ENCODE measurements at regions of chr9 and their contacts with region 1.

Region 1: GRCh38 chr9:5886114-5886939 is 4.4 kb upstream of the MLANA start:
- DNase-seq: peak; percentile 74
- ATAC-seq: peak; percentile 80
- H3K4me3 ChIP-seq: no peak overlapping the region
- H3K4me3 Mint-ChIP-seq: no peak overlapping the region
- H3K27ac ChIP-seq: no peak overlapping the region
- H3K27ac Mint-ChIP-seq: no peak overlapping the region
- H3K4me1 ChIP-seq: no peaks in the 10 kb centered on the region
- H3K4me1 Mint-ChIP-seq: no peaks in the 10 kb centered on the region
- H3K27me3 ChIP-seq: no peaks in the 10 kb centered on the region
- H3K27me3 Mint-ChIP-seq: no peaks in the 10 kb centered on the region
- CTCF ChIP-seq: peak; percentile 90

Region 2: DNA sequence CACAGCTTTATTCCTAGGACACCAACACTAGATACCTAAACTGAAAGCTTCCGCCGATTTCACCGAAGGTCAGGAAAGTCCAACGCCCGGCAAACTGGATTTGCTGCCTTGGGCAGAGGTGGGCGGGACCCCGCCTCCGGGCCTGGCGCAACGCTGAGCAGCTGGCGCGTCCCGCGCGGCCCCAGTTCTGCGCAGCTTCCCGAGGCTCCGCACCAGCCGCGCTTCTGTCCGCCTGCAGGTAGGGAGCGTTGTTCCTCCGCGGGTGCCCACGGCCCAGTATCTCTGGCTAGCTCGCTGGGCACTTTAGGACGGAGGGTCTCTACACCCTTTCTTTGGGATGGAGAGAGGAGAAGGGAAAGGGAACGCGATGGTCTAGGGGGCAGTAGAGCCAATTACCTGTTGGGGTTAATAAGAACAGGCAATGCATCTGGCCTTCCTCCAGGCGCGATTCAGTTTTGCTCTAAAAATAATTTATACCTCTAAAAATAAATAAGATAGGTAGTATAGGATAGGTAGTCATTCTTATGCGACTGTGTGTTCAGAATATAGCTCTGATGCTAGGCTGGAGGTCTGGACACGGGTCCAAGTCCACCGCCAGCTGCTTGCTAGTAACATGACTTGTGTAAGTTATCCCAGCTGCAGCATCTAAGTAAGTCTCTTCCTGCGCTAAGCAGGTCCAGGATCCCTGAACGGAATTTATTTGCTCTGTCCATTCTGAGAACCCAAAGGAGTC is 435.8 kb before region 1 on chr9 and contains the start of gene CD274:
- CTCF ChIA-PET with region 1: no interaction called
- POLR2A ChIA-PET with region 1: no interaction called
- intact Hi-C with region 1: no loop called
- DNase-seq: peak; percentile 85
- ATAC-seq: peak; percentile 91
- H3K4me3 ChIP-seq: peak within 1 kb of the TSS; percentile 75 to 93 (median 81)
- H3K4me3 Mint-ChIP-seq: peak within 1 kb of the TSS; percentile 83
- H3K27ac ChIP-seq: peak within 1 kb of the TSS; percentile 72 to 83
- H3K27ac Mint-ChIP-seq: peak within 1 kb of the TSS; percentile 94
- H3K4me1 ChIP-seq: peaks cover 21 to 30% of the 10 kb centered on the region in 2 donors
- H3K4me1 Mint-ChIP-seq: peaks cover 49% of the 10 kb centered on the region
- H3K27me3 ChIP-seq: no peaks in the 10 kb centered on the region
- H3K27me3 Mint-ChIP-seq: no peaks in the 10 kb centered on the region
- CTCF ChIP-seq: peak; percentile 57
- total RNA-seq, gene CD274: 5.2 and 7.0 TPM in 2 replicates

Region 3: DNA sequence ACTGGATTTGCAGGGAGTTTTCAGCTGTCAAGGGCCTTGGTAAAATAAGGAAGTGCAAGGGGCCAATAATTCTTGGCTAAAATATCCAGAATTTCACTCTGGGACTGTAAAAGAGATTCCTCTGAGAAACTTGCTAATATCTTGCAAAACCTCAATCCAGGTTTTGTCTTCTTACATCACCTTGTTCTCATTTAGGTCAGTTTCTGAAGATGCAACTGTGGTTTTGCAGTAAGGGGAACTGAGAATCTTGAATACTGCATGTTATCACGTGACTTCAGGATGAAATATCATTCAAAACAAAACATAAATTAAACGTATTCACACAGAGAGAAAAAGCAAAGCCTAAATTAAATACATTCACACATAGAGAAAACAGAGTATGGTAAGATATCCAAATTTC is 292.4 kb before region 1 on chr9:
- CTCF ChIA-PET with region 1: no interaction called
- POLR2A ChIA-PET with region 1: no interaction called
- intact Hi-C with region 1: no loop called
- DNase-seq: peak; percentile 84
- ATAC-seq: peak; percentile 57
- H3K4me3 ChIP-seq: no peak overlapping the region
- H3K4me3 Mint-ChIP-seq: peak overlapping the region; percentile 50
- H3K27ac ChIP-seq: peak overlapping the region in 1 of 2 donors; percentile 40
- H3K27ac Mint-ChIP-seq: peak overlapping the region; percentile 69
- H3K4me1 ChIP-seq: peaks cover 41 to 44% of the 10 kb centered on the region in 2 donors
- H3K4me1 Mint-ChIP-seq: peaks cover 68% of the 10 kb centered on the region
- H3K27me3 ChIP-seq: no peaks in the 10 kb centered on the region
- H3K27me3 Mint-ChIP-seq: no peaks in the 10 kb centered on the region
- CTCF ChIP-seq: no peak

Region 4: GRCh38 chr9:5718296-5719032 is 167.9 kb before region 1 on chr9:
- CTCF ChIA-PET with region 1: no interaction called
- POLR2A ChIA-PET with region 1: no interaction called
- intact Hi-C with region 1: no loop called
- DNase-seq: no peak
- ATAC-seq: no peak
- H3K4me3 ChIP-seq: no peak overlapping the region
- H3K4me3 Mint-ChIP-seq: no peak overlapping the region
- H3K27ac ChIP-seq: peak overlapping the region in 1 of 2 donors; percentile 33
- H3K27ac Mint-ChIP-seq: peak overlapping the region; percentile 28
- H3K4me1 ChIP-seq: no peaks in the 10 kb centered on the region
- H3K4me1 Mint-ChIP-seq: peaks cover 6% of the 10 kb centered on the region
- H3K27me3 ChIP-seq: no peaks in the 10 kb centered on the region
- H3K27me3 Mint-ChIP-seq: no peaks in the 10 kb centered on the region
- CTCF ChIP-seq: no peak

Region 5: GRCh38 chr9:5843794-5844504 is 42.4 kb before region 1 on chr9:
- CTCF ChIA-PET with region 1: no interaction called
- POLR2A ChIA-PET with region 1: no interaction called
- intact Hi-C with region 1: no loop called
- DNase-seq: no peak
- ATAC-seq: no peak
- H3K4me3 ChIP-seq: no peak overlapping the region
- H3K4me3 Mint-ChIP-seq: peak overlapping the region; percentile 23
- H3K27ac ChIP-seq: no peak overlapping the region
- H3K27ac Mint-ChIP-seq: no peak overlapping the region
- H3K4me1 ChIP-seq: peaks cover 14 to 23% of the 10 kb centered on the region in 2 donors
- H3K4me1 Mint-ChIP-seq: peaks cover 28% of the 10 kb centered on the region
- H3K27me3 ChIP-seq: no peaks in the 10 kb centered on the region
- H3K27me3 Mint-ChIP-seq: no peaks in the 10 kb centered on the region
- CTCF ChIP-seq: no peak

Region 6: DNA sequence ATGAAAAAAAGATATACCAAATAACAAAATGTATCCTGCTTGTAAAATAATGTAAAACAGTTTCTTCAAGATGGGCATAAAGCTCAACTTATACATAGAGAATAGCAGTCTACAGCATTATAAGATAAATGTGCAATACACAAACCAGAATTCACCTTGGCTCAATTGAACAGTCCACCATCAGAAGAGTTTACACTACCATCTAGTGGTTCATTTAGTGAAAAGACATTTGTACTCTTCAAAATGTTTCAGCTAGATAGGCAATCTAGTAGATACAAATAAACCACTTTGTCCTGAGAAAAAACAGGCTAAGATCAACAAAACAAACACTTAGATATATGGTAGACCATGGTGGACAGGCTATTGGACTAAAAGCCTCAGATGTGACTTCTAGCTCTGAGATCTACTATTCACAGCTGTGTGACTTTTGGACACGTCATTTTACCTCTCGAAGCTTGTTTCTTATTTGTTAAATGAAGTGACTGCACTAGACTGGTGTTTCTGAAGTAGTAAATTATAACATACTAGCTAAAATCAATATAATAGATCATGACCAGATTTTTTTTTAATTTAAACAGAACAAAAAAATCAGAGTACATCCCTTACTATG is 419.7 kb after region 1 on chr9:
- CTCF ChIA-PET with region 1: interaction called, 38 read pairs
- POLR2A ChIA-PET with region 1: no interaction called
- intact Hi-C with region 1: no loop called
- DNase-seq: peak; percentile 25
- ATAC-seq: no peak
- H3K4me3 ChIP-seq: no peak overlapping the region
- H3K4me3 Mint-ChIP-seq: no peak overlapping the region
- H3K27ac ChIP-seq: no peak overlapping the region
- H3K27ac Mint-ChIP-seq: no peak overlapping the region
- H3K4me1 ChIP-seq: no peaks in the 10 kb centered on the region
- H3K4me1 Mint-ChIP-seq: no peaks in the 10 kb centered on the region
- H3K27me3 ChIP-seq: peaks cover 0 to 5% (median 4%) of the 10 kb centered on the region in 4 experiments
- H3K27me3 Mint-ChIP-seq: peaks cover 15% of the 10 kb centered on the region
- CTCF ChIP-seq: peak; percentile 57

Region 7: GRCh38 chr9:6667633-6668280 is 781.4 kb after region 1 on chr9:
- CTCF ChIA-PET with region 1: no interaction called
- POLR2A ChIA-PET with region 1: no interaction called
- intact Hi-C with region 1: loop called (anchors 2 kb)
- DNase-seq: peak; percentile 59
- ATAC-seq: peak; percentile 33
- H3K4me3 ChIP-seq: no peak overlapping the region
- H3K4me3 Mint-ChIP-seq: no peak overlapping the region
- H3K27ac ChIP-seq: no peak overlapping the region
- H3K27ac Mint-ChIP-seq: no peak overlapping the region
- H3K4me1 ChIP-seq: no peaks in the 10 kb centered on the region
- H3K4me1 Mint-ChIP-seq: peaks cover 4% of the 10 kb centered on the region
- H3K27me3 ChIP-seq: no peaks in the 10 kb centered on the region
- H3K27me3 Mint-ChIP-seq: no peaks in the 10 kb centered on the region
- CTCF ChIP-seq: peak; percentile 75

Measured in B cell (primary cell).